Activated CD4-positive, alpha-beta memory T cell treated with anti-CD3 and anti-CD28 coated beads, Interleukin-2, amount 10 ng/mL, durations not matched to agents 7 days and 5 days (primary cell): ENCODE measurements at regions of chr20 and their contacts with region 1.

Region 1: DNA sequence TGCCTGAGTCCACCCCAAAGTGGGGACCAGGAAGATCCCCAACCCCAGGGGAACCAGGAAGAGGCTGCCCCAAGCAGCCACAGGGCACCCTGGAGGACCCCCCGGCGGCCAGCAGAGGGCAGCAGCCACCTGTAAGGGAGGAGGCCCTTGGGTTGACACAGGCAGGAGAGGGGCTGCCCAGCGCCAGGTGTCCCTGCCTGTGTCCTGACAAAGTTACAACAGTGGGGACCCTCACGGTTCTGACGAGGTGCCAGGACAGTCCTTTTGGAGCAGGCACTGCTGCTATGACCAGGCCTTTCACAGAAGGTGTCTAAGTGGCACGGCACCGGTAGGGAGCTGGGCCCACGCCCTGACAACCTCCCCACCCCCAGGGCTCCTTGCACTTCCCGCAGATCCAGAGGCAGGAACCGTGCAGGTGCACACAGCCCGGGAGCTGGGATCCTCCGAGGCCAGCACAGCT is 176.7 kb downstream of the BMP7 start:
- DNase-seq: peak; percentile 68
- H3K4me3 Mint-ChIP-seq: no peak overlapping the region
- H3K27ac Mint-ChIP-seq: no peak overlapping the region
- H3K4me1 Mint-ChIP-seq: peaks cover 8% of the 10 kb centered on the region
- H3K27me3 Mint-ChIP-seq: peaks cover 3% of the 10 kb centered on the region

Region 2: GRCh38 chr20:57109574-57110145 is 19.9 kb after region 1 on chr20:
- CTCF ChIA-PET with region 1: no interaction called
- POLR2A ChIA-PET with region 1: no interaction called
- DNase-seq: no peak
- H3K4me3 Mint-ChIP-seq: no peak overlapping the region
- H3K27ac Mint-ChIP-seq: no peak overlapping the region
- H3K4me1 Mint-ChIP-seq: no peaks in the 10 kb centered on the region
- H3K27me3 Mint-ChIP-seq: no peaks in the 10 kb centered on the region

Region 3: DNA sequence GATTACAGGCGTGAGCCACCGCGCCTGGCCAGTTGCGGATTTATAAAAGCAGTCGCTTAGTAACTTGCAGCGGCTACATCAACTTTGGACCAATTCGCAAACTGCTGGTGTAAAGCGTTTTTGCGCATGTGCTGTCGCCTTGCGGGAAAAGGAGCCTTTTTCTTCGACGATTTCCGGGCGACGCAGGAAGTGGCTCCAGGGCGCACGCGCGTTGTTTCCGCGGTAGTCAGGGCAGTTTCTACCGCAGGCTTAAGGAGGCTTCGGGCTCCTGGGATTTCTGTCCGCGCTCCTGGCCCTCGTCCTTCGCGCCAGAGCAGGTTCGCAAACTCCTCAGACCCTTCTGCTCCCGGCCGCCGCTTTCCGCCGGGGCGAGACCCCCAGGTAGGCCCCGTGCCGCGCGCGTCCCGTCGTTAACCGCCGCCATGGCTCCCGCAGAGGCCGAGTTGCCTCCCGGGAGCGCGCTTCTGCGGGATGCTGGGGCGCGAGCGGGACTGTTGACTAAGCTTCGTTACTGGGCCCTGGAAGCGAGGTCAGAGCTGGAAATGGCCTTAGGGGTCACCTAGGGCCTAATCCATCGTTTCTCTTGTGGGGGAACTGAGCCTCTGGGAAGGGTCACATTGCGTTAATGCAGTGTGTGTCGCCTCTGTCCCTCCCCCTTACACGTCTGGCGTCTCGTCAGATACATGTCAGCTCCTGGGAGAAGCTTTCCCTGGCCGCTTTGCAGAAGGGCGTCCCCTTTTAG is 261.5 kb after region 1 on chr20 and contains the start of gene RAE1:
- CTCF ChIA-PET with region 1: interaction called, 33 read pairs
- POLR2A ChIA-PET with region 1: no interaction called
- DNase-seq: peak; percentile 91
- H3K4me3 Mint-ChIP-seq: peak within 1 kb of the TSS; percentile 89
- H3K27ac Mint-ChIP-seq: peak within 1 kb of the TSS; percentile 75
- H3K4me1 Mint-ChIP-seq: peaks cover 20% of the 10 kb centered on the region
- H3K27me3 Mint-ChIP-seq: peaks cover 7% of the 10 kb centered on the region
- total RNA-seq, gene RAE1: 33.8 to 35.3 TPM